ENCODE measurements at regions of chr10 and their contacts with region 1.

Region 1: GRCh38 chr10:91632671-91633550 is at the start of gene PPP1R3C:
- DNase-seq: no peak
- ATAC-seq: no peak
- H3K4me3 ChIP-seq: no peak within 1 kb of the TSS
- H3K27ac ChIP-seq: no peak within 1 kb of the TSS
- H3K4me1 ChIP-seq: no peaks in the 10 kb centered on the region
- H3K27me3 ChIP-seq: no peaks in the 10 kb centered on the region
- CTCF ChIP-seq: no peak
- POLR2A ChIP-seq: no peak
- RAD21 ChIP-seq: no peak
- total RNA-seq, gene PPP1R3C: 0.20 TPM

Region 2: GRCh38 chr10:90947030-90947940 is 685.6 kb before region 1 on chr10:
- CTCF ChIA-PET with region 1: no interaction called
- POLR2A ChIA-PET with region 1: no interaction called
- RAD21 ChIA-PET with region 1: no interaction called
- intact Hi-C with region 1: no loop called
- DNase-seq: no peak
- ATAC-seq: no peak
- H3K4me3 ChIP-seq: no peak overlapping the region
- H3K27ac ChIP-seq: no peak overlapping the region
- H3K4me1 ChIP-seq: no peaks in the 10 kb centered on the region
- H3K27me3 ChIP-seq: no peaks in the 10 kb centered on the region
- CTCF ChIP-seq: no peak
- POLR2A ChIP-seq: no peak
- RAD21 ChIP-seq: no peak

Region 3: DNA sequence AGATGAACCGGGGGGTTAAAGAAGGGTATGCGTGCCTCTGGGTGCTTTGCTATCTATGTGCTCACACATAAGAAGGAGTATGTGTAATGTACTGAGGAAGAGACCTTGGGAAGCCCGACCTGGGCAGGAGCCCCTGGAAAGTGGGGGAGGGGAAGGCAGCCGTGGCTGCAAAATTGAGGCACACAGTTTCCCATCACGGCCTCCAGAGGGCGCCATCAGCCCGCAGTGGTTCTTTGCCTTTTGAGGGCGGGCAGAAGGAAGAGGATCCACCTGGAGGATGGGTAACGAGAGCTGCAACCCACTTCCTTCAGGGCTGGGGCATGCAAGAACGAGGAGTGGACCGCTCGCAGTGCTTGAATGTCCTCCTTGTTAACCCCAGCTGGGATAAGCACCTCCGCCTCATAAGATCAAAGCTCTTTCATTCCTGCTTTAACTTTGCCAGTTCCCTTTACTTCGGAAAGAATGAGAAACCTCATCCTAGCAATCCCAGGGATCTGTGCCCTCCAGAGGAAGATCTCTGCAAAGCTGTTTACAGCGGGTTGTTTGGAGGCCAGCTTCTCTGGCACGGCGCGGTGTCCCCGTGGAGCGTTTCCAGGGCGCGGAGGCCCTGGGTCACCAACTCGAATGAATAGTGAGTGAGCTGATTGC is 334.6 kb before region 1 on chr10:
- CTCF ChIA-PET with region 1: interaction called, 21 read pairs
- POLR2A ChIA-PET with region 1: no interaction called
- RAD21 ChIA-PET with region 1: interaction called, 3 to 5 read pairs
- intact Hi-C with region 1: loop called (anchors 1 kb)
- DNase-seq: peak; percentile 56
- ATAC-seq: peak; percentile 94
- H3K4me3 ChIP-seq: peak overlapping the region in 1 of 2 experiments; percentile 8; a peak in 1 of 4 replicates
- H3K27ac ChIP-seq: no peak overlapping the region
- H3K4me1 ChIP-seq: peaks cover 4 to 11% of the 10 kb centered on the region in 2 experiments; a peak in 2 of 4 replicates
- H3K27me3 ChIP-seq: no peaks in the 10 kb centered on the region
- CTCF ChIP-seq: peak; percentile 86 to 90 (median 87)
- POLR2A ChIP-seq: no peak
- RAD21 ChIP-seq: peak; percentile 96

Region 4: DNA sequence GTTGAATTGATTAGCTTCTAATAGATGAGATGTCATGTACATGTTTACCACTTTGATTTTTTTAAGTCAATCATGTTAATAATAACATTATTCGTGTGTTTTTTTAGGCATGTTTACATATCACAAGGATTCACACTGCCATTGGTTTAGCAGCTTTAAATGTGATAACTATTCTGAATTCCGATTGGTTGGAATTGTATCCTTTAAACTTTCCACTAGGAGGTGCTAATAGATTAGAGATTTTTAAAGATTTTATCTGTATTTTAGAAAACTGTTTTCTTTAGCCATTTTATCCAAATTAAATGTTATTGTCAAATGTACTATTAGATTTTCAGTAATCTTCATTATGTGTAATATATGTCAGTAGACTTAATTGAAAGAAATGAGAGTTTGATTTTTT is 139.6 kb before region 1 on chr10:
- CTCF ChIA-PET with region 1: interaction called, 6 read pairs
- POLR2A ChIA-PET with region 1: no interaction called
- RAD21 ChIA-PET with region 1: no interaction called
- intact Hi-C with region 1: loop called (anchors 1 kb)
- DNase-seq: peak; percentile 32
- ATAC-seq: no peak
- H3K4me3 ChIP-seq: no peak overlapping the region
- H3K27ac ChIP-seq: no peak overlapping the region
- H3K4me1 ChIP-seq: no peaks in the 10 kb centered on the region
- H3K27me3 ChIP-seq: no peaks in the 10 kb centered on the region
- CTCF ChIP-seq: peak; percentile 10 to 51 (median 40); a peak in 3 of 6 replicates
- POLR2A ChIP-seq: no peak
- RAD21 ChIP-seq: peak; percentile 53; the same call in 1 of the 2 replicates

Region 5: GRCh38 chr10:91617073-91617580 is 15.8 kb before region 1 on chr10:
- CTCF ChIA-PET with region 1: interaction called, 18 read pairs
- POLR2A ChIA-PET with region 1: no interaction called
- RAD21 ChIA-PET with region 1: no interaction called
- intact Hi-C with region 1: no loop called
- DNase-seq: no peak
- ATAC-seq: peak; percentile 41; the same call in 1 of the 2 replicates
- H3K4me3 ChIP-seq: no peak overlapping the region
- H3K27ac ChIP-seq: no peak overlapping the region
- H3K4me1 ChIP-seq: peaks cover 2 to 21% of the 10 kb centered on the region in 2 experiments; a peak in 2 of 4 replicates
- H3K27me3 ChIP-seq: no peaks in the 10 kb centered on the region
- CTCF ChIP-seq: no peak
- POLR2A ChIP-seq: no peak
- RAD21 ChIP-seq: no peak

Measured in HCT116 (cell line).